B cell (primary cell): ENCODE measurements at regions of chr1 and their contacts with region 1.

Region 1: DNA sequence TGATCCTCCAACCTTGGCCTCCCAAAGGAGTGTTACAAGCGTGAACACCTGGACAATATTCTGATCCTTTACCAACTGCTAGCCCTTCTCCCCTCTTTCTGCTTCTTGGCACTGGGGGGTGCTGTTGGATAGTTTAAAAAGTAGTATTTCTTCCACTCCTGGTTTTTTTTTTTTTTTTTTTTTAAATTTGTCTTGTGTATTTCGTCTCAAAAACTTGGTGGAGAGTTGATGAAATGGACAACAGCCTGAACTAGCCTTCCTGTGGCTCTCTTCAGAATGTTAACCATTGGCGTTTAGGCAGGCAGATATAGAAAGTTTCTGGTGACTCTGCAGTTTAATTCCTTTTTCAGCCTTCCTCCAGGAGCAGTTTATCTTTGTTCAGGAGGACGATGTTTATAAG is 69.7 kb upstream of the USP24 start:
- DNase-seq: peak; percentile 46
- ATAC-seq: no peak
- H3K4me3 ChIP-seq: no peak overlapping the region
- H3K4me3 Mint-ChIP-seq: no peak overlapping the region
- H3K27ac ChIP-seq: no peak overlapping the region
- H3K27ac Mint-ChIP-seq: no peak overlapping the region
- H3K4me1 ChIP-seq: peaks cover 8 to 16% of the 10 kb centered on the region in 2 donors
- H3K4me1 Mint-ChIP-seq: peaks cover 37% of the 10 kb centered on the region
- H3K27me3 ChIP-seq: no peaks in the 10 kb centered on the region
- H3K27me3 Mint-ChIP-seq: peaks cover 7% of the 10 kb centered on the region
- CTCF ChIP-seq: peak; percentile 68

Region 2: GRCh38 chr1:54850737-54851136 is 434.1 kb before region 1 on chr1:
- CTCF ChIA-PET with region 1: no interaction called
- POLR2A ChIA-PET with region 1: no interaction called
- intact Hi-C with region 1: no loop called
- DNase-seq: no peak
- ATAC-seq: no peak
- H3K4me3 ChIP-seq: no peak overlapping the region
- H3K4me3 Mint-ChIP-seq: no peak overlapping the region
- H3K27ac ChIP-seq: no peak overlapping the region
- H3K27ac Mint-ChIP-seq: no peak overlapping the region
- H3K4me1 ChIP-seq: no peaks in the 10 kb centered on the region
- H3K4me1 Mint-ChIP-seq: no peaks in the 10 kb centered on the region
- H3K27me3 ChIP-seq: no peaks in the 10 kb centered on the region
- H3K27me3 Mint-ChIP-seq: no peaks in the 10 kb centered on the region
- CTCF ChIP-seq: no peak

Region 3: GRCh38 chr1:55140546-55140983 is 144.3 kb before region 1 on chr1:
- CTCF ChIA-PET with region 1: interaction called, 33 read pairs
- POLR2A ChIA-PET with region 1: no interaction called
- intact Hi-C with region 1: no loop called
- DNase-seq: peak; percentile 76
- ATAC-seq: peak; percentile 88
- H3K4me3 ChIP-seq: no peak overlapping the region
- H3K4me3 Mint-ChIP-seq: no peak overlapping the region
- H3K27ac ChIP-seq: no peak overlapping the region
- H3K27ac Mint-ChIP-seq: no peak overlapping the region
- H3K4me1 ChIP-seq: no peaks in the 10 kb centered on the region
- H3K4me1 Mint-ChIP-seq: peaks cover 3% of the 10 kb centered on the region
- H3K27me3 ChIP-seq: no peaks in the 10 kb centered on the region
- H3K27me3 Mint-ChIP-seq: no peaks in the 10 kb centered on the region
- CTCF ChIP-seq: peak; percentile 87

Region 4: GRCh38 chr1:55337801-55338447 is 53.1 kb after region 1 on chr1:
- CTCF ChIA-PET with region 1: interaction called, 23 read pairs
- POLR2A ChIA-PET with region 1: no interaction called
- intact Hi-C with region 1: loop called (anchors 1 kb)
- DNase-seq: peak; percentile 34
- ATAC-seq: no peak
- H3K4me3 ChIP-seq: no peak overlapping the region
- H3K4me3 Mint-ChIP-seq: no peak overlapping the region
- H3K27ac ChIP-seq: no peak overlapping the region
- H3K27ac Mint-ChIP-seq: no peak overlapping the region
- H3K4me1 ChIP-seq: no peaks in the 10 kb centered on the region
- H3K4me1 Mint-ChIP-seq: peaks cover 3% of the 10 kb centered on the region
- H3K27me3 ChIP-seq: no peaks in the 10 kb centered on the region
- H3K27me3 Mint-ChIP-seq: peaks cover 11% of the 10 kb centered on the region
- CTCF ChIP-seq: peak; percentile 40

Region 5: GRCh38 chr1:56525489-56526041 is 1240.7 kb after region 1 on chr1:
- CTCF ChIA-PET with region 1: no interaction called
- POLR2A ChIA-PET with region 1: no interaction called
- intact Hi-C with region 1: loop called (anchors 5 kb)
- DNase-seq: peak; percentile 33
- ATAC-seq: peak; percentile 46
- H3K4me3 ChIP-seq: no peak overlapping the region
- H3K4me3 Mint-ChIP-seq: peak overlapping the region; percentile 46
- H3K27ac ChIP-seq: peak overlapping the region in 1 of 2 donors; percentile 17
- H3K27ac Mint-ChIP-seq: peak overlapping the region; percentile 70
- H3K4me1 ChIP-seq: peaks cover 44 to 48% of the 10 kb centered on the region in 2 donors
- H3K4me1 Mint-ChIP-seq: peaks cover 63% of the 10 kb centered on the region
- H3K27me3 ChIP-seq: no peaks in the 10 kb centered on the region
- H3K27me3 Mint-ChIP-seq: no peaks in the 10 kb centered on the region
- CTCF ChIP-seq: no peak

Region 6: DNA sequence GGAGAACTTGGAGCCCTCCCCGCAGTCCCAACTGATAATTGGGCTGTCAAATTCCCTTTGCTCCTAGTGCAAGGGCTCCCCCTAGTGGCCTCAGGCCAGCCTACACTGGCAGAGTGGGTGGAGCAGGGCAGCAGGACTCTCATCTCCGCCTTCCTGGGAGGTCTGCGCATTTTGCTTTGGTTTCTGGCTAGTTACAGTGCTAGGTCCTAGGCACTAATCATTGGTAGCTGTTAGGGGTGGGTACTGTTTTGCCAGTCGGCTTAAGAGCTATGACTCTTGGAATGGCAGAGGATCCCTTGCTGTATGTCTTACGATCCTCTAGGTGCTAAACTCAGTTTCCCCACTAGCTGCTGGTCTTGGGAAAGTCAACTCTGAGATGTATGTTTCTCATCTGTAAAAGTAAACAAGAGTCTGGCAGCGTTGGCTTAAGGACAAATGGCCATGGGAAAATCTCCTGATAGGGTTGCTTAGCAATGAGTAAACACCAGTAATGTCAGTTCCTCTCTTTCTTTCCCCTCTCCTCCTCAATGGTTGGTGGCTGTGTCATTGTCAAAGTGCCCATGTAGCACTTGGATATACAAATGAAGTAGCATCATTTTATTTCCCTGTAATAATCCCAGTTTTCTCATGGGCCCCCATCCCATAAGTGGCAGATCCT is 1536.4 kb after region 1 on chr1:
- CTCF ChIA-PET with region 1: no interaction called
- POLR2A ChIA-PET with region 1: no interaction called
- intact Hi-C with region 1: loop called (anchors 10 kb)
- DNase-seq: peak; percentile 53
- ATAC-seq: peak; percentile 49
- H3K4me3 ChIP-seq: no peak overlapping the region
- H3K4me3 Mint-ChIP-seq: no peak overlapping the region
- H3K27ac ChIP-seq: no peak overlapping the region
- H3K27ac Mint-ChIP-seq: no peak overlapping the region
- H3K4me1 ChIP-seq: no peaks in the 10 kb centered on the region
- H3K4me1 Mint-ChIP-seq: no peaks in the 10 kb centered on the region
- H3K27me3 ChIP-seq: peaks cover 0 to 5% (median 4%) of the 10 kb centered on the region in 4 experiments
- H3K27me3 Mint-ChIP-seq: peaks cover 33% of the 10 kb centered on the region
- CTCF ChIP-seq: peak; percentile 82